ENCODE measurements at regions of chr22 and their contacts with region 1.

Region 1: GRCh38 chr22:39003165-39003638 is 10.9 kb upstream of the APOBEC3C start:
- DNase-seq: peak; percentile 51
- ATAC-seq: peak; percentile 94
- H3K4me3 Mint-ChIP-seq: no peak overlapping the region
- H3K27ac Mint-ChIP-seq: peak overlapping the region; percentile 41
- H3K4me1 Mint-ChIP-seq: peaks cover 18% of the 10 kb centered on the region
- H3K27me3 Mint-ChIP-seq: peaks cover under 1% of the 10 kb centered on the region
- CTCF ChIP-seq: peak; percentile 16

Region 2: DNA sequence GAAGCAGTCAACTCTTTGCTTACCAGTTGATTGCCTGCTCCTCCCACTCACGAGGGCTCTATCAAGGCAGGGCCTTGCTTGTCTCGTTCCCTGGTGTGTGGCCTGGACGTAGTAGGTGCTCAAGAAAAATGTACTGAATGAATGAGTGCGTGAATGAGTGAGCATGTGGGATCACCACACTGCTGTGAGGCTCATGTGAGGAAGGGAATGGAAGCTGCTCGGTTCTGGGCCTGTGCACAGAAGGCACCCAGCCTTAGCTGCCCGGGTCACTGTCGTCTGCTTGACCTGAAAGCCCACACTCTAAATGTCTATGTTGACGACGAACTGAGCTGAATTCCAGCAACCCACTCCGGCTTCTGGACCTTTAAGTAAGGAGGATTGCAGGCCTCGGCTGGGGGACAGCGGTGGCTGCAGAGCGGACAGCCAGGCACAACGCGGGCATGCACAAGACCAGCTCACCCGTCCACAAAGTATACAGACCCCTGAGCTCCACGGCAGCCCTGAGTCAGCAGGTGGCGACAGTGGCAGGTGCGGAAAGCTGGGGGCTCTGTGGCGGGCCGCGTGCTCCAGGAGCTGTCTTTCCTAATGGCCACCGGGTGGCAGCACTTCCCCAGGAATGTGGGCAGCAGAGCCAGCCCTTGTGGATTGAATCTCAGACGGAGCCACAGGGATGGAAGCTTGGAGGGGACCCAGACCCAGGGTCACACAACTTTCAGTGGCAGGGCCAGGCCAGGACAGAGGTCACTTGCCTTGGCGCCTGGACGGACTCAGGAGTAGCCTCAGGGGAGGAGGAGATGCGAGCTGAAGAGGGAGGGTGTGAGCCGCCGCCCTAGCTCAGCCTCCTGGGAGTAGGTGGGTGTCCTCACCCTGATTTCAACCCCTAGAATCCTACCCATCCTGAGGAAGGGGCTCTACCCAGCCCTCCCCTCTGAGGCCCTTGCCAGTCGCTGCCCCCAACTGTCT is 951.0 kb before region 1 on chr22:
- CTCF ChIA-PET with region 1: interaction called, 5 read pairs
- POLR2A ChIA-PET with region 1: no interaction called
- intact Hi-C with region 1: loop called (anchors 1 kb)
- DNase-seq: peak; percentile 75
- ATAC-seq: peak; percentile 87
- H3K4me3 Mint-ChIP-seq: no peak overlapping the region
- H3K27ac Mint-ChIP-seq: no peak overlapping the region
- H3K4me1 Mint-ChIP-seq: peaks cover 14% of the 10 kb centered on the region
- H3K27me3 Mint-ChIP-seq: peaks cover 13% of the 10 kb centered on the region
- CTCF ChIP-seq: peak; percentile 75

Region 3: GRCh38 chr22:38715176-38715764 is 287.9 kb before region 1 on chr22:
- CTCF ChIA-PET with region 1: no interaction called
- POLR2A ChIA-PET with region 1: no interaction called
- intact Hi-C with region 1: no loop called
- DNase-seq: no peak
- ATAC-seq: no peak
- H3K4me3 Mint-ChIP-seq: no peak overlapping the region
- H3K27ac Mint-ChIP-seq: no peak overlapping the region
- H3K4me1 Mint-ChIP-seq: peaks cover 43% of the 10 kb centered on the region
- H3K27me3 Mint-ChIP-seq: no peaks in the 10 kb centered on the region
- CTCF ChIP-seq: no peak

Region 4: DNA sequence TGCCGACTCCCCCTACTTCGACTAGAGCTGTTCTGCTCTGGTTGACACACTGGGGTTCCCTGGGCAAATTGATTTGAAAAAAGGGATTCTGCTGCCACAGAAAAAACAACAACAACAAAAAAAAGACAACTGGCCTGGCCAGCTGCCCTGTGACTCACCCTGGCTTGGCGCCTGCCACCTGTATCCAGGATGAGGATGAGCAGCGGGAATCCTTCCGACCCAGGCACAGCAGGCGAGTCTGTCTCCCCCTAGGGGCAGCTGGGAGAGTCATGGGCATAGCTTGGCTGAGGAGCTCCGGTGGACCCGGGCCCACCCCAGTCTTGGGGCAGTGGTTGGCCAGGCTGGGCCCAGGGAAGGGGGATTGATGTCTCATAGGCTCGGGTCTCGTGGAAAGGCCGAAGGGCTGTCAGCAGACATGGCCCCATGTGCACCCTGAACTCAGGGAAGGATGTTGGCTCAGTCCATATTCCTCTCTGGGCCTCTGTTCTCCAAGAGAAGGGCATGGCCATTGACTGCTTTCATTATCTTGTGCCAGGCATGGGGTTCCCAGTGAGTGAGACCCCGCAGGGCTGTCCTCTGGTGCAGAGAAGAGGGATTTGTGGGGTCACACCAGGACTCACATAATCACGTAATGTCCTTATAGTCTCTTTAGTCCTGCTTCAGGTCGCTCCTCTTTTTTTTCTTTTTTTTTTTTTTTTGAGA is 237.0 kb before region 1 on chr22:
- CTCF ChIA-PET with region 1: interaction called, 12 read pairs
- POLR2A ChIA-PET with region 1: no interaction called
- intact Hi-C with region 1: loop called (anchors 1 kb)
- DNase-seq: peak; percentile 29
- ATAC-seq: peak; percentile 55
- H3K4me3 Mint-ChIP-seq: no peak overlapping the region
- H3K27ac Mint-ChIP-seq: no peak overlapping the region
- H3K4me1 Mint-ChIP-seq: peaks cover 2% of the 10 kb centered on the region
- H3K27me3 Mint-ChIP-seq: no peaks in the 10 kb centered on the region
- CTCF ChIP-seq: no peak

Region 5: DNA sequence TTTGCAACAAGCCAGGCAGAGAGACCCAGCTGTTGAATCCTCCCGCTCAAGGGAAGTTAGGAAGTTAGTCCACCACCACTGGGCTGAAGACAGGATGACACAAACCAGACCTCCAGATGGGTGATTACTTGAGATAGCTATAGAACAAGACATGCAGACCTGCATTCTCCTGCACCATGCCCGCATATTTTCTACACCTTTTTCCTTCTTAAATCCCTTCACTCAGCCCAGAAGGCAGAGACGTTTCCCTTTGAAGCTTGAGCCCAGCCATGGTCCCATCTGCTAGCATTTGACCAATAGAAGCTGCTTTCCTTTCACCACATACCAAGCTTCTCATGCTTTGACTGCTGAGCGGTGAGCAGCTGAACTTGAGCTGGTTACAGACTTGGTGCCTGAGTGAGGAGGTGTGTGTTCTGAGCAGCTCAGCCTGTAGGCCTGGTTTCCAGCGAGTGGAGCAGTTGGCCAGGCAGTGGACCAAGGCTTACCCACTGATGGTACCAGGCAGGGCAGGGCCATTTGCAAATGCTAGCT is 102.0 kb before region 1 on chr22:
- CTCF ChIA-PET with region 1: no interaction called
- POLR2A ChIA-PET with region 1: no interaction called
- intact Hi-C with region 1: no loop called
- DNase-seq: no peak
- ATAC-seq: no peak
- H3K4me3 Mint-ChIP-seq: peak overlapping the region; percentile 35
- H3K27ac Mint-ChIP-seq: no peak overlapping the region
- H3K4me1 Mint-ChIP-seq: peaks cover 12% of the 10 kb centered on the region
- H3K27me3 Mint-ChIP-seq: peaks cover 4% of the 10 kb centered on the region
- CTCF ChIP-seq: no peak

Region 6: GRCh38 chr22:38927033-38927781 is 76.0 kb before region 1 on chr22:
- CTCF ChIA-PET with region 1: interaction called, 12 read pairs
- POLR2A ChIA-PET with region 1: no interaction called
- intact Hi-C with region 1: loop called (anchors 1 kb)
- DNase-seq: peak; percentile 40
- ATAC-seq: peak; percentile 87
- H3K4me3 Mint-ChIP-seq: peak overlapping the region; percentile 67
- H3K27ac Mint-ChIP-seq: no peak overlapping the region
- H3K4me1 Mint-ChIP-seq: peaks cover 4% of the 10 kb centered on the region
- H3K27me3 Mint-ChIP-seq: peaks cover 35% of the 10 kb centered on the region
- CTCF ChIP-seq: no peak

Region 7: DNA sequence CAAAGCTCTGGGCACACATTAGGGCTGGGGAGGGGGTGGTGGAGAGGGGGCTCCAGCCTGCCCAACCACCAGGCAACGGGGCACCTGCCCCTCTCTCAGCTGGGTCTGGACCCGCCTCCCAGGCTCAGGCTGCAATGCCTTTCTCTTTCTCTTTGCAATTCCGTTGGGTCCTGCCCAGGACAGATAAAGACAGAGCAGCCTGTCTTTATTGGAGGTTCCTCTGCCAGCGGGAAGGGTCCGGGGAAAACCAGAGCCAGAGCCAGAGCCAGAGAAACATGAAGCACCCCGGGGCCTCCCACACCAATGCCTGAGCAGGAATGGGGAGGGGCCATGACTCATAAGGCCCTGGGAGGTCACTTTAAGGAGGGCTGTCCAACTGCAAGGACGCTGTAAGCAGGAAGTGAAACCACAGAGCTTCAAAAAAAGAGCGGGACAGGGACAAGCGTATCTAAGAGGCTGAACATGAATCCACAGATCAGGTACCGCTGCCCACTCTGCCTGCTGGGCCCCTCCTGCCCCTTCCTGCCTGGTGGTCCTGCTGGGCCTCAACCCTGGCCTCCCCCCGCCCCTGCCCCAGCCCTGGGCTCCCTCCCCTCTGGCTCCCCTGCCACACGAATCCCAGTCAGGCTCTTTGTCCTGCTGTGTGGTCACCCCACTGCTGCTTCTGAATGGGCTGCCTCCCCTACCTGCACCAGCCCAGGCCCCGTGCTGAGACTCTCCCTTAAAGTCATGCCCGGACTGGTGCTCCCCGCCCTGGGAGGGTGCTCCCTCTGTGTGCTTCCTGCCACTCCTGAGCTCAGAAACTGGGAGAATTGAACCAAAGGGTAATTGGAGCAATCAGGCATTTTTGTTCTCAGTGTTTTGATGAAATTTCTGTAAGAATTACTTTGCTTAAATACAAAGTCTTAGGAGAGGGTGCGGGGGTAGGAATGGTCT is 20.9 kb before region 1 on chr22 and contains the start of gene APOBEC3B:
- CTCF ChIA-PET with region 1: interaction called, 28 read pairs
- POLR2A ChIA-PET with region 1: interaction called, 6 read pairs
- intact Hi-C with region 1: no loop called
- DNase-seq: peak; percentile 65
- ATAC-seq: peak; percentile 82
- H3K4me3 Mint-ChIP-seq: peak within 1 kb of the TSS; percentile 88
- H3K27ac Mint-ChIP-seq: peak within 1 kb of the TSS; percentile 82
- H3K4me1 Mint-ChIP-seq: peaks cover 52% of the 10 kb centered on the region
- H3K27me3 Mint-ChIP-seq: no peaks in the 10 kb centered on the region
- CTCF ChIP-seq: no peak
- total RNA-seq, gene APOBEC3B: 8.0 TPM in 2 replicates

Region 8: DNA sequence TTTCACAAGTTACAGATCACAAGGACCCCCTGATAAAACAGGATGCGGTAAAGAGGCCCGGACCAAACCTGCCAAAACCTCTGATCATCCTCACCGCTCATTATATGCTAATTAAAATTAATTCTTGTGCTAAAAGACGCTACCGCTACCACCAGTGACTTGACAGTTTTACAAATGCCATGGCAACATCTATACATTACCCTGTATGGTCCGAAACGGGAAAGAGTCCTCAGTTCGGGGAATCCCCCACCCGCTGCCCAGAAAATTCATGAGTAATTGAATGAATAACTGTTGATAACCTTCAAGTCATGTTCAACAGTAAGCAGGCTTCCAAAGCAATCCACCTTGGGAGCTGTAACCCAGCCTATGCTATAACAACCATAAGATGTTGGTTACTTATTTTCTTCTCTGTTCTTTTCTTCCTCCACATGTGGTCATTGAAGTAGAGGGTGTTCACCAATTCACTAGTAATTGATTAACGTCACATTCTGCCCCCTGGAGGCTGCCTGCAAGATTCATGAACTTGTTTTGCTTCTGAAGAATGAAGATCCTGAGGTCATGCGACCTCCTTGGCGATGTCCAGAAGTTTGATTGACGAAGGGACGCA is 114.5 kb after region 1 on chr22:
- CTCF ChIA-PET with region 1: interaction called, 17 read pairs
- POLR2A ChIA-PET with region 1: interaction called, 5 read pairs
- intact Hi-C with region 1: loop called (anchors 1 kb)
- DNase-seq: peak; percentile 37
- ATAC-seq: peak; percentile 64
- H3K4me3 Mint-ChIP-seq: peak overlapping the region; percentile 67
- H3K27ac Mint-ChIP-seq: peak overlapping the region; percentile 86
- H3K4me1 Mint-ChIP-seq: peaks cover 52% of the 10 kb centered on the region
- H3K27me3 Mint-ChIP-seq: no peaks in the 10 kb centered on the region
- CTCF ChIP-seq: no peak

Region 9: GRCh38 chr22:39306581-39307361 is 303.6 kb after region 1 on chr22:
- CTCF ChIA-PET with region 1: interaction called, 5 read pairs
- POLR2A ChIA-PET with region 1: no interaction called
- intact Hi-C with region 1: loop called (anchors 1 kb)
- DNase-seq: no peak
- ATAC-seq: peak; percentile 29
- H3K4me3 Mint-ChIP-seq: no peak overlapping the region
- H3K27ac Mint-ChIP-seq: no peak overlapping the region
- H3K4me1 Mint-ChIP-seq: peaks cover 17% of the 10 kb centered on the region
- H3K27me3 Mint-ChIP-seq: no peaks in the 10 kb centered on the region
- CTCF ChIP-seq: no peak

Measured in activated B cell treated with CpG ODN at 0.5 μM for 24 hours (primary cell).